Psoas muscle (tissue), 8 donors: ENCODE measurements at regions of chr5 and their contacts with region 1.

Region 1: DNA sequence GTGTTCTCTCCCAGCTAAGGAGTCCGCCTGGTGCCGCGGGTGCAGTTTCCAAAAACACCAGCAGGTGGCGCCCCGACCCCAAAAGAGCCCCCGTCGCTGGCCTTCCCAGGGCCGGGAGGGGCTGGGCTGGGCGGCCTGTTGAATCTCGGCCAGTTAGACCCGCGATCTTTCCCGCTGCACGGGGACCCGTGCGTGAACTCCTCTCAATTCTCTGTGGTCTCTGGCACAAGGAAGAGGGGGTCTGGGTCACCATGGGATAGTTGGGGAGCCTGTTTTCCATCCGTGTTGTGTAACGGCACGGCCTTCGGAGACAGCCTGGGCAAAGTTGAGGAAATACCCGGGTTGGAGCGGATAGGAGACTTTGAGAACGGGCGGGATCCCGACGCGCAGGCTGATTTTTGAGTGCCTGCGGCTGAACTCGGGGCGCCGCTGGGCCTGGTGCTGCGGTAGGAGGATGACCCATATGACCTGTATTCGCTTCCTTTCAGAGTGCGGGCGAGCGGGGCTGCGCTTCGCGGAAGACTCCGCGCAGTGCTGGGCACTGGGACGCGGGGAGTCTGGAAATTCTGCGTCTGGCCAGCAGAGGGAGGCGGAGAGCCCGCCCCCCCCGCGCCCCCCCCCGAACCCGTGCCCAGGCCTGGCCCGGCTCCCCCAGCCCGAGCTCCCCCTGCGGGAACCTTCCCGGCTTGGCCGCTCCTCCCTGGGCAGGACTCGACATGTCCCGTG is 7.9 kb upstream of the PSD2 start:
- DNase-seq: peak; percentile 87 to 94
- ATAC-seq: peak; percentile 84 to 90 (median 86)
- H3K4me3 ChIP-seq: peak overlapping the region; percentile 71
- H3K27ac ChIP-seq: peak overlapping the region; percentile 80
- H3K4me1 ChIP-seq: no peaks in the 10 kb centered on the region
- H3K27me3 ChIP-seq: no peaks in the 10 kb centered on the region
- CTCF ChIP-seq: peak; percentile 98

Region 2: GRCh38 chr5:139368613-139369012 is 419.1 kb before region 1 on chr5:
- intact Hi-C with region 1: no loop called
- DNase-seq: no peak
- ATAC-seq: peak in 3 of 4 donors; percentile 17 to 52 (median 29)
- H3K4me3 ChIP-seq: no peak overlapping the region
- H3K27ac ChIP-seq: peak overlapping the region; percentile 33
- H3K4me1 ChIP-seq: peaks cover 23% of the 10 kb centered on the region
- H3K27me3 ChIP-seq: no peaks in the 10 kb centered on the region
- CTCF ChIP-seq: no peak

Region 3: GRCh38 chr5:139670369-139671095 is 117.2 kb before region 1 on chr5:
- intact Hi-C with region 1: no loop called
- DNase-seq: no peak
- ATAC-seq: peak in 3 of 4 donors; percentile 16 to 36 (median 26)
- H3K4me3 ChIP-seq: peak overlapping the region; percentile 67
- H3K27ac ChIP-seq: peak overlapping the region; percentile 98
- H3K4me1 ChIP-seq: peaks cover 96% of the 10 kb centered on the region
- H3K27me3 ChIP-seq: no peaks in the 10 kb centered on the region
- CTCF ChIP-seq: no peak

Region 4: GRCh38 chr5:139844472-139845145 is 56.9 kb after region 1 on chr5:
- intact Hi-C with region 1: loop called (anchors 1 to 2 kb)
- DNase-seq: peak; percentile 76 to 87
- ATAC-seq: peak; percentile 45 to 67 (median 54)
- H3K4me3 ChIP-seq: no peak overlapping the region
- H3K27ac ChIP-seq: no peak overlapping the region
- H3K4me1 ChIP-seq: peaks cover 4% of the 10 kb centered on the region
- H3K27me3 ChIP-seq: no peaks in the 10 kb centered on the region
- CTCF ChIP-seq: peak; percentile 76

Region 5: DNA sequence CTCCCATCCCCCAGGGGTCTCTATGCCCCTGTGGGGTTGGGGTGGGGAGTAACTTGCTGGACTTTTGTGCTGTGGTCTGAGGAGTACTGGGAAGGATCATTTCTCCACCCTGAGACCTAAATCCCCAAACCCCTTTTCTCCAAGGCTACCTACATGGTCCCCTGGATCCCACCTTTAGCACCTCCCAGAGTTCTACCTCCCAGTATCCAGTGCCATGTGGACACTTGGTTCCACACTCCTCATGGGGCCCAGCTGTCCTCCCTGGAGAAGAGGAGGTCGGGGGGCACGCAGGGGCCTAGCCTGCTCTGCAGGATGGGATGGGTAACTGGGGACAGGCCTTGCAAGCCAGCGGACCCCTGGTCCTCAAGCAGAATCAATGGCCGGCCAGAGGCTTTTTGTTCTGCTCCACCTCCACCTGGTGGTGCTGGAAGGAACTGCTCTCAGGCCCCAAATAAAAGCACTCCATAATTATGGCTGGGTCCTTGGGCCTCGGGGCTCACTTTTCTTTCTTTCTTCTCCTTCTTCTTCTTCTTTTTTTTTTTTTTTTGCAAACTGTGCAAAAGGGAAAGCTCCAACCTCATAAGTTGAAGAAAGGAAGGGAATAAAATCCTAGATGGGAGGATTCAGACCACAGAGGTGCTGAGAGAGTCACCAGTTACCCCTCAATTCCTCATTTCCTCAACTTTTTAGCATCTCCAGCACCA is 76.3 kb after region 1 on chr5:
- intact Hi-C with region 1: loop called (anchors 1 to 2 kb)
- DNase-seq: peak; percentile 65 to 73
- ATAC-seq: peak; percentile 75 to 85 (median 83)
- H3K4me3 ChIP-seq: no peak overlapping the region
- H3K27ac ChIP-seq: peak overlapping the region; percentile 82
- H3K4me1 ChIP-seq: peaks cover 12% of the 10 kb centered on the region
- H3K27me3 ChIP-seq: no peaks in the 10 kb centered on the region
- CTCF ChIP-seq: peak; percentile 91

Region 6: DNA sequence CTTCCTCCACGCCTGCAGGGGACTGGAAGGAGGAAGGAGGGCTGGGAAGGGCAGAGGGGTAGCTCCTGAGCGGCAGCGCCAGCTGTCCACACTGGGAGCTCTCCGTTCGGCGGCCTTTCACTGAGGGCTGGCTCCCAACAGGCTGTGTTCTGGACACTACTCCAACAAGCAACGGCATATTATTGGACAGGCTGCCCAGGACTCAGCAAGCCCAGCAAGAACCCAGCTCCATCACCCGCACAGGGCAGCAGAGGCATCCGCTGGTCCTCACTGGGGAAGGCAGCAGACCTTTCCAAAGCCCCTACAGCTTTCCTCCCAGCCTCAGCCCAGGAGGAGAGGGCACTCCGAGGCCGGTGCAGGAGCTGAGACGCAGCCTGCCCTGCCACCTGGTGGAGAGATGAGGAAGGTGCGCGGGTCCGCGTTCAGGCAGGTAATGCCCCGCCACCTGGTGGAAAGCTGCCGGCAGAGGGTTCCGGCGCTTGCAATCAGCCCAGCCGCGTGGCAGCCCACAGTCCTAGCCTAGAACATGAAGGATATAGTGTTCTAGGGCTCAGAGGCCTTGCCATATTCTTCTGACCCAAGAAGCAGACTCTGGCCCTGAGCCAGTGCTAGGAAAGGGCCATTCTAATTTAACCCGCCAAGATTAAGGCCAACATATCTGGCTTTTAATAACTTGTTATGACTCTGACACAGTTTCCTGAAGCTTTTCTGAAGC is 181.0 kb after region 1 on chr5:
- intact Hi-C with region 1: loop called (anchors 1 to 2 kb)
- DNase-seq: peak; percentile 87 to 94
- ATAC-seq: peak; percentile 91 to 97 (median 94)
- H3K4me3 ChIP-seq: peak overlapping the region; percentile 24
- H3K27ac ChIP-seq: peak overlapping the region; percentile 90
- H3K4me1 ChIP-seq: peaks cover 42% of the 10 kb centered on the region
- H3K27me3 ChIP-seq: no peaks in the 10 kb centered on the region
- CTCF ChIP-seq: peak; percentile 100

Region 7: GRCh38 chr5:140145818-140146522 is 358.2 kb after region 1 on chr5:
- intact Hi-C with region 1: loop called (anchors 5 kb)
- DNase-seq: peak; percentile 82 to 90
- ATAC-seq: peak; percentile 94 to 97 (median 94)
- H3K4me3 ChIP-seq: peak overlapping the region; percentile 66
- H3K27ac ChIP-seq: no peak overlapping the region
- H3K4me1 ChIP-seq: peaks cover 16% of the 10 kb centered on the region
- H3K27me3 ChIP-seq: no peaks in the 10 kb centered on the region
- CTCF ChIP-seq: peak; percentile 81

Region 8: GRCh38 chr5:140157032-140157803 is 369.5 kb after region 1 on chr5:
- intact Hi-C with region 1: loop called in 1 of 2 experiments (anchors 2 kb)
- DNase-seq: peak; percentile 87 to 93
- ATAC-seq: peak; percentile 95 to 97 (median 96)
- H3K4me3 ChIP-seq: peak overlapping the region; percentile 55
- H3K27ac ChIP-seq: no peak overlapping the region
- H3K4me1 ChIP-seq: peaks cover 3% of the 10 kb centered on the region
- H3K27me3 ChIP-seq: no peaks in the 10 kb centered on the region
- CTCF ChIP-seq: peak; percentile 91